Activated CD8-positive, alpha-beta T cell treated with anti-CD3 and anti-CD28 coated beads, Interleukin-2, amount 10 ng/mL, durations not matched to agents 7 days and 5 days (primary cell): ENCODE measurements at regions of chr1 and their contacts with region 1.

Region 1: DNA sequence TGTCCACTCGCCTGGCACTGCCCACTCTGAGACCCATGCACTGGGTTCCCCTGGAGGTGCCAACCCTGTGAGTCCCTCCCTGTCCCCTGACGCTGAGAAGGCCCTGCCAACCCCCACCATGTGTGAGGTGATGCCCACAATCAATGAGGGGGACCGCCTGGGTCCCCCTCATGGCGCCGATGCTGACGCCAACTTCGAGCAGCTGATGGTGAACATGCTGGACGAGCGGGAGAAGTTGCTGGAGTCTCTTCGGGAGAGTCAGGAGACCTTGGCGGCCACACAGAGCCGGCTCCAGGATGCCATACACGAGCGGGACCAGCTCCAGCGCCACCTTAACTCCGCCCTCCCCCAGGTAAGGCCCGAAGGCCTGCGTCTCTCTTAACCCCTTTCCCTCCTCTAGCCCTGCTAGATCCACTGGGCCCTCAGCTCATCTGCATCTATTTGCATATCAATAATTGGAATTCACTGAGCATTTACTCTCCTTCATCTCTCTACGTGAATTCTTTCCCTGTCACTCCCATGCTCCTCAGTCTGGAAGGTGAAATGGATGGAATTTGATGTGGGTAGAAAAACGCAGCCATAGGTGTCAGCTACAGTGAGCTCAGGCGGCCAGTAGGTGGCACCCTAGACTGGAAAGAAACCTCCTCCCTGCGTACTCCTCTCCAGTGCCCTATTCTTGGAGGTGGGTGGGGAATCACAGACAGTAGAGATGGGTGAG is 12.8 kb downstream of the PPFIA4 start:
- DNase-seq: peak; percentile 77
- ATAC-seq: peak; percentile 80
- H3K4me3 Mint-ChIP-seq: no peak overlapping the region
- H3K27ac Mint-ChIP-seq: no peak overlapping the region
- H3K4me1 Mint-ChIP-seq: peaks cover 10% of the 10 kb centered on the region
- H3K27me3 Mint-ChIP-seq: no peaks in the 10 kb centered on the region

Region 2: DNA sequence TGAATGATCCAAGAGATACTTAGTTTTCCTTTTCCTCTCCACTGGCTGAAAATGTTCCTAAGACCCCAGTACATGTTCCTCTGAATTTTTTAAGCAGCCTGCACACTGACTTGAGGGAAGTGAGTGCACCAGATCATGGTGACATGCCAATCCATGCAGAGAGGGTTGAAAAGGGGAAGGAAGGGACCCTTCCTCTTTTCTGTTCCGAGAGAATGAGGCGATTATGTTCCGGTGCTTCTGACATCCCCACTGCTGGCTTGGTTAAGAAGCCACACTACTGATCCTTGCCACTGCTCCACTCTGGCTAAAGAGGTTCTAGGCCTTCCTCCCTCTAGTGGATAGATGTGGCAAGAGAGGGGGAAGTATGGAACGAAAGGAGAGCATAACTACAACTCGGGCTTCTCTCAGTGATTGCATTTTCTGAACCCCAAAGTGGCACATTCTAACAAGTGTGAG is 70.2 kb before region 1 on chr1:
- CTCF ChIA-PET with region 1: no interaction called
- POLR2A ChIA-PET with region 1: no interaction called
- DNase-seq: peak; percentile 60
- ATAC-seq: peak; percentile 54
- H3K4me3 Mint-ChIP-seq: no peak overlapping the region
- H3K27ac Mint-ChIP-seq: peak overlapping the region; percentile 44
- H3K4me1 Mint-ChIP-seq: peaks cover 30% of the 10 kb centered on the region
- H3K27me3 Mint-ChIP-seq: peaks cover 4% of the 10 kb centered on the region

Region 3: DNA sequence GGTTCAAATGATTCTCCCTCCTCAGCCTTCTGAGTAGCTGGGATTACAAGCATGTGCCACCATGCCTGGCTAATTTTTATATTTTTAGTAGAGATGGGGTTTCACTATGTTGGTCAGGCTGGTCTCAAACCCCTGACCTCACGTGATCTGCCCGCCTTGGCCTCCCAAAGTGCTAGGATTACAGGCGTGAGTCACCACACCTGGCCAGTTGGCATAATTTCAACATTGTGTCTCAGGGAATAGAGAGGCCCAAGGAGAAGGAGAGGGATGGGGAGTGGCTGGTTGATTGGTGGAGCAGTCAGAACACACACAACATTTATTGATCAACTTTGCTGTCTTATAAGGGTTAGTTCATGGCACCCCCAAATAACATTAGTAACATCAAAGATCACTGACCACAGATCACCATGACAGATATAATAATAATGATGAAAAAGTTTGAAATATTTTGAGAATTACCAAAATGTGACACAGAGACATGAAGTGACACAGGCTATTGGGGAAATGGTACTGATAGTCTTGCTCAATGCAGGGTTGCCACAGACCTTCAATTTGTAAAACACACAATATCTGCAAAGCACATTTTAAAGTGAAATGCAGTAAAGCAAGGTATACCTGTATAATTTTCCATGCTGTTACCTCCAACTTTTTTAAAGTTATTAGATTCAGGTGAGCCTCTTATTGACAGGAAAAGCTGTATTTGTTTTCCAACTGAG is 56.2 kb before region 1 on chr1:
- CTCF ChIA-PET with region 1: no interaction called
- POLR2A ChIA-PET with region 1: no interaction called
- DNase-seq: no peak
- ATAC-seq: no peak
- H3K4me3 Mint-ChIP-seq: no peak overlapping the region
- H3K27ac Mint-ChIP-seq: no peak overlapping the region
- H3K4me1 Mint-ChIP-seq: peaks cover 3% of the 10 kb centered on the region
- H3K27me3 Mint-ChIP-seq: peaks cover 19% of the 10 kb centered on the region

Region 4: DNA sequence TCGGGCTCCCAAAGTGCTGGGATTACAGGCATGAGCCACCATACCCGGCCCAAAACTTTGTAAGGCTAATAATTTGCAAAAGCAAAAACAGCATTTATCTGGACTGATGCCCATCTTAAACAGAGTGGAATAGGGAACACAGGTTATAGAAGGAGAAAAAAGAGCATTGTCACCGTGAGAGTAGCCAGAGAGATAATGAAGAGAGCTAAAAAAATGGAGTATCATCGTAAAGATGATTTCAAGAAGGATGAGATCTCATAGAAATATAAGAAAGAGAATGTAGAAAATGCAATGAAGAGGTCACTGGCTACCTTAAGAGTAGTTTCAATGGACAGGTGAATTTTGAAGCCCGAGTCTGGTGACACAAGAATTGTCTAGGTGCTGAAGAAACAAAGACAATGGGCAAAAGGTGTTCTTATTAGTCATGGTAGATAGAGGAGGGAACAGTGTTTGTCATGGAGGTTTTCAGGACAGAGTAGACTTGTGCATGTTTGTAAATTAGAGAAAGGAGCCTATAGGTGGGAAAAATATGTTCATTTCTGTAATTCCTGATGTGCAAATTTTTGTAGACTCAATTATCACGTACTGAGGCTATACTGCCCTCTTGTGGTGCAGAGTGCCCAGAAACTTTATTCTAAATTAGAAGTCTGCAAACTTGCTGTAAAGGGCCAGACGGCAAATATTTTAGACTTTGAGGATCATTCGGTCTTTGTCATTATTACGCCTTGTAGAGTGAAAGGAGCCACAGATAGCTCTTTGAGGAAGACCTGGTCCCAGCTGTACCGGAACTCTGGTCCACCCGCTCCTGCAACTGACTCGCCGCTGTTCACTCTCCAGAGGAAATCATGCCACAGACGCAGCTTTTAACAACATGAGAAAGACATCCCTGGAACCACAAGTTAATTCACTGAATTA is 40.0 kb before region 1 on chr1:
- CTCF ChIA-PET with region 1: interaction called, 10 read pairs
- POLR2A ChIA-PET with region 1: no interaction called
- DNase-seq: peak; percentile 81
- ATAC-seq: peak; percentile 44
- H3K4me3 Mint-ChIP-seq: peak overlapping the region; percentile 59
- H3K27ac Mint-ChIP-seq: peak overlapping the region; percentile 50
- H3K4me1 Mint-ChIP-seq: peaks cover 19% of the 10 kb centered on the region
- H3K27me3 Mint-ChIP-seq: peaks cover 30% of the 10 kb centered on the region

Region 5: GRCh38 chr1:203051841-203052324 is 12.8 kb after region 1 on chr1:
- CTCF ChIA-PET with region 1: interaction called, 36 read pairs
- POLR2A ChIA-PET with region 1: no interaction called
- DNase-seq: no peak
- ATAC-seq: no peak
- H3K4me3 Mint-ChIP-seq: no peak overlapping the region
- H3K27ac Mint-ChIP-seq: no peak overlapping the region
- H3K4me1 Mint-ChIP-seq: no peaks in the 10 kb centered on the region
- H3K27me3 Mint-ChIP-seq: no peaks in the 10 kb centered on the region

Region 6: DNA sequence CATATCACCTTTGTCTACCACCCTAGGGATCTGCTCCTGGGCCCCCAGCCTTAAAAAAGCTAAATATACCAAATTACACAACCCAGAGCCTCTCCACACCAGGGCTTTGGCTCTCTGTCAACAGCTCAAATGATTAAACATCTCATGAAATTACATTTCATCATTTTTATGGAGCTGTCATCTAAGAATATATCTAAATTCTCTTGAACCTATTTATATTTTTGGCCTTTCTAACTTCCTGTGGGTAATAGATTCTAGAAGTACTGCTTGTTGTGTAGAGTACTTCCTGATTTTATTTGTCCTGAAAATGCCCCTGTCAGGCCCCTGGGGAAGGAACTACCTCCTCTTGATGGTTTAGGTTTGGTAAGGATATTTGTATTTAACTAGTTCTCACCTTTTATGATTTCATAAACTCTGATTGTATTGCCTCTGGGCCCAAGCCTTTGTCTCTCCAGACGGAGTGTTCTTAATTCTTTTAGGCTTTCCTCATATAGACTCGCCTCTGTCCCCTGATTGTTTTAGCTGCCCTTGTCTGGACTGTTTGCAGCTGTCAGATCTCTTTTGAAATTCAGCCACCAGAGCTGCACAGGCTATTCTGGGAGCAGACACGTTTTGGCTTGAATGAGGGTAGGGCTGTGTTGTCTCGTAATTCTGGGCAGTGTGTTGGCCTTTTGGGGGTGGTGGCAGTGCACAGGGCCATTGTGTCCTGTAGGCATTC is 30.1 kb after region 1 on chr1:
- CTCF ChIA-PET with region 1: interaction called, 13 read pairs
- POLR2A ChIA-PET with region 1: no interaction called
- DNase-seq: no peak
- ATAC-seq: no peak
- H3K4me3 Mint-ChIP-seq: no peak overlapping the region
- H3K27ac Mint-ChIP-seq: no peak overlapping the region
- H3K4me1 Mint-ChIP-seq: peaks cover 3% of the 10 kb centered on the region
- H3K27me3 Mint-ChIP-seq: peaks cover 3% of the 10 kb centered on the region

Region 7: GRCh38 chr1:203207751-203208150 is 168.7 kb after region 1 on chr1:
- CTCF ChIA-PET with region 1: interaction called, 10 read pairs
- POLR2A ChIA-PET with region 1: no interaction called
- DNase-seq: no peak
- ATAC-seq: no peak
- H3K4me3 Mint-ChIP-seq: no peak overlapping the region
- H3K27ac Mint-ChIP-seq: no peak overlapping the region
- H3K4me1 Mint-ChIP-seq: peaks cover 9% of the 10 kb centered on the region
- H3K27me3 Mint-ChIP-seq: peaks cover 15% of the 10 kb centered on the region